ENCODE measurements at regions of chr5 and their contacts with region 1.

Region 1: GRCh38 chr5:42767491-42768105 is 11.0 kb downstream of the CCDC152 start:
- DNase-seq: no peak
- H3K4me3 Mint-ChIP-seq: no peak overlapping the region
- H3K27ac Mint-ChIP-seq: no peak overlapping the region
- H3K4me1 Mint-ChIP-seq: no peaks in the 10 kb centered on the region
- H3K27me3 Mint-ChIP-seq: peaks cover 10% of the 10 kb centered on the region

Region 2: GRCh38 chr5:42005561-42006153 is 761.9 kb before region 1 on chr5:
- intact Hi-C with region 1: loop called (anchors 5 kb)
- DNase-seq: no peak
- H3K4me3 Mint-ChIP-seq: no peak overlapping the region
- H3K27ac Mint-ChIP-seq: no peak overlapping the region
- H3K4me1 Mint-ChIP-seq: no peaks in the 10 kb centered on the region
- H3K27me3 Mint-ChIP-seq: peaks cover 6% of the 10 kb centered on the region

Region 3: GRCh38 chr5:42404366-42404765 is 363.2 kb before region 1 on chr5:
- intact Hi-C with region 1: no loop called
- DNase-seq: no peak
- H3K4me3 Mint-ChIP-seq: no peak overlapping the region
- H3K27ac Mint-ChIP-seq: no peak overlapping the region
- H3K4me1 Mint-ChIP-seq: no peaks in the 10 kb centered on the region
- H3K27me3 Mint-ChIP-seq: no peaks in the 10 kb centered on the region

Region 4: GRCh38 chr5:42495914-42496313 is 271.7 kb before region 1 on chr5:
- intact Hi-C with region 1: no loop called
- DNase-seq: no peak
- H3K4me3 Mint-ChIP-seq: no peak overlapping the region
- H3K27ac Mint-ChIP-seq: no peak overlapping the region
- H3K4me1 Mint-ChIP-seq: no peaks in the 10 kb centered on the region
- H3K27me3 Mint-ChIP-seq: no peaks in the 10 kb centered on the region

Measured in activated CD4-positive, alpha-beta T cell treated with anti-CD3 and anti-CD28 coated beads, Interleukin-2, amount 10 ng/mL, durations not matched to agents 24 days and 14 days (primary cell).